ENCODE measurements at regions of chr5 and their contacts with region 1.

Region 1: DNA sequence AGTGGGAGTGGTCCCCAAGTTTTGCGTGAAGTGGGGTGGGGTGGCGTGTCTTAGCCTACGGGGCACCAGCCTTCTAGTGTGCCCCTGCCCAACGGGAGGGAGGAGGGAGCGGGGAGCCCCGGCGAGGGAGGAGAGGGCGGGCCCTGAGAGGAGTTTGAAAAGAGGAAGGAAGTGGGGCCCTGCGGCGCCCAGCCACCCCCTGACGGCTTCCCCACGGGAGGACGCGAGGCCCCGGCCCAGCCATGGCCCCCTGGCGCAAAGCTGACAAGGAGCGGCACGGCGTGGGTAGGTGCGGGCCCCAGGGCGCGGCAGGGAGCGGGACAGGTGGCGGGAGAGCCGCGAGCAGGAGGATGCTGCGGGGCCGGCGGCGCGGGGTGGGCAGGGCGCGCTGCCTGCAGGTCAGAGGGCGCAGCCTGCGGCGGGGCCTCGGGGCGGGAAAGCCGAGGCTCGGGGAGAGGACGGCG is at the start of gene DOCK2:
- DNase-seq: peak; percentile 86
- ATAC-seq: peak; percentile 92
- H3K4me3 ChIP-seq: peak within 1 kb of the TSS; percentile 83 to 89 (median 87)
- H3K4me3 Mint-ChIP-seq: peak within 1 kb of the TSS; percentile 98
- H3K27ac ChIP-seq: peak within 1 kb of the TSS; percentile 86 to 90
- H3K27ac Mint-ChIP-seq: peak within 1 kb of the TSS; percentile 96
- H3K4me1 ChIP-seq: peaks cover 30 to 36% of the 10 kb centered on the region in 2 donors
- H3K4me1 Mint-ChIP-seq: peaks cover 49% of the 10 kb centered on the region
- H3K27me3 ChIP-seq: no peaks in the 10 kb centered on the region
- H3K27me3 Mint-ChIP-seq: no peaks in the 10 kb centered on the region
- CTCF ChIP-seq: no peak
- total RNA-seq, gene DOCK2: 330 and 342 TPM in 2 replicates

Region 2: GRCh38 chr5:168579488-168580226 is 1057.5 kb before region 1 on chr5:
- CTCF ChIA-PET with region 1: no interaction called
- POLR2A ChIA-PET with region 1: interaction called, 4 read pairs
- intact Hi-C with region 1: loop called (anchors 2 kb)
- DNase-seq: peak; percentile 99
- ATAC-seq: peak; percentile 95
- H3K4me3 ChIP-seq: peak overlapping the region; percentile 49 to 90 (median 76)
- H3K4me3 Mint-ChIP-seq: peak overlapping the region; percentile 87
- H3K27ac ChIP-seq: peak overlapping the region; percentile 79 to 94
- H3K27ac Mint-ChIP-seq: peak overlapping the region; percentile 95
- H3K4me1 ChIP-seq: peaks cover 18 to 29% of the 10 kb centered on the region in 2 donors
- H3K4me1 Mint-ChIP-seq: peaks cover 45% of the 10 kb centered on the region
- H3K27me3 ChIP-seq: no peaks in the 10 kb centered on the region
- H3K27me3 Mint-ChIP-seq: no peaks in the 10 kb centered on the region
- CTCF ChIP-seq: no peak

Region 3: DNA sequence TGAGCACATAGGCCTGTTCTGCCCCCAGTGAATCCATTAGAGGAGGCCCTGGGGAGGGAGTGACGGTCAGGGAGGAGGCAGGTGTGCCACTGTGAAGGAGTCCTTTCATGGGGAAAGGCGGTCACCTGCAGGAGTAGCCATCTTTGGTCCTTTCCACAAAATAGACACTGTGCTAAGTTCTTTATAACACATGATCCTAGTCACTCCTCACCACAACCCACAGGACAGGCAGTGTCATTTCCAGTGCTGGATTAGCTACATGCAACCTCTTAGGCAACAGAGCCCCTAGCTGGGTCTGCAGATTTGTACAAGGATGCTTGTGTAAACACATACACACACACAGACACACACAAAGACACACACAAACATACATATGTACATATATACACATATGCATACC is 18.2 kb after region 1 on chr5:
- CTCF ChIA-PET with region 1: no interaction called
- POLR2A ChIA-PET with region 1: interaction called, 3 read pairs
- intact Hi-C with region 1: loop called (anchors 2 kb)
- DNase-seq: no peak
- ATAC-seq: no peak
- H3K4me3 ChIP-seq: no peak overlapping the region
- H3K4me3 Mint-ChIP-seq: no peak overlapping the region
- H3K27ac ChIP-seq: peak overlapping the region in 1 of 2 donors; percentile 18
- H3K27ac Mint-ChIP-seq: peak overlapping the region; percentile 46
- H3K4me1 ChIP-seq: peaks cover 13 to 44% of the 10 kb centered on the region in 2 donors
- H3K4me1 Mint-ChIP-seq: peaks cover 71% of the 10 kb centered on the region
- H3K27me3 ChIP-seq: no peaks in the 10 kb centered on the region
- H3K27me3 Mint-ChIP-seq: no peaks in the 10 kb centered on the region
- CTCF ChIP-seq: no peak

Region 4: DNA sequence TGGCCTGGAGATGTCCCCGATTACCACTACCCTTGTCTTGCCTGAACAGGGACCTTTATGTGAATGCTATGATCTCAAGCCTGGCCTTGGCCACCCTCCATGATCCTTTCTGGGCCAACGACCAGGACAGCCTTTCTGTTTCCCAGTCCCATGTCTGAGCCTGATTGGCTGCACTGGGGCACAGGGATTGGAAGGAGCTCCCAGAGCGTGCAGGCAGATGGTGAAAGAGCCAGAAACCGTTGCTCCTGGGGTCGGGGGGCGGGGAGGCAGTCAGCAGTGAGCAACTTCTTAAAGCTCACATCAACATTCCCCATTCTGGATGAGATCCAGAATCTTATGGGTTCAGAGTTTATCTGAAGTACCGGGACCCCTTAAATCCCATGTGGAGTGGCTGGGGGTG is 258.8 kb after region 1 on chr5:
- CTCF ChIA-PET with region 1: no interaction called
- POLR2A ChIA-PET with region 1: no interaction called
- intact Hi-C with region 1: no loop called
- DNase-seq: no peak
- ATAC-seq: no peak
- H3K4me3 ChIP-seq: no peak overlapping the region
- H3K4me3 Mint-ChIP-seq: no peak overlapping the region
- H3K27ac ChIP-seq: no peak overlapping the region
- H3K27ac Mint-ChIP-seq: no peak overlapping the region
- H3K4me1 ChIP-seq: peaks cover 0 to 7% of the 10 kb centered on the region in 2 donors
- H3K4me1 Mint-ChIP-seq: peaks cover 19% of the 10 kb centered on the region
- H3K27me3 ChIP-seq: no peaks in the 10 kb centered on the region
- H3K27me3 Mint-ChIP-seq: no peaks in the 10 kb centered on the region
- CTCF ChIP-seq: no peak